Lower leg skin (tissue), 4 donors: ENCODE measurements at regions of chr2 and their contacts with region 1.

Region 1: DNA sequence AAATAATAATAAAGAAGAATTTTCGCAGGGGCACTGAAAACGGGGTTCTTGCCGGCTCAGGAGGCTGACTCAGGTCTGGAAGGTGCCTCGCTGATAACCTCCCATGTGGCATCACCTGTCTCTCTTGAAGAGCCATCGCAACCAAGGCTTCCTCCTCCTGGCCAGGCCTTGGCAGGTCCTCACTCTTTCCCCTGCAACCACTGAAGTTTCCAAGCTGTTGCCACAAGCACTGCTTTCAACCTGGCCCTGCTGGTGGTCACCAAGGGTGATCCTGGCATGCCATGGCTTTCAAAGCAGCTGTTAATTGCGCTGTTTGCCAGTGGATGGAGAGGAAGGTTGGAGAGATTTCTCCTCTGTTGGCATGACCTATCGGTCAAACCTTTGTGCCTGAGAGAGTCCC is 163.6 kb upstream of the COPS8 start:
- DNase-seq: no peak
- H3K4me3 ChIP-seq: no peak overlapping the region
- CTCF ChIP-seq: no peak
- POLR2A ChIP-seq: no peak

Region 2: DNA sequence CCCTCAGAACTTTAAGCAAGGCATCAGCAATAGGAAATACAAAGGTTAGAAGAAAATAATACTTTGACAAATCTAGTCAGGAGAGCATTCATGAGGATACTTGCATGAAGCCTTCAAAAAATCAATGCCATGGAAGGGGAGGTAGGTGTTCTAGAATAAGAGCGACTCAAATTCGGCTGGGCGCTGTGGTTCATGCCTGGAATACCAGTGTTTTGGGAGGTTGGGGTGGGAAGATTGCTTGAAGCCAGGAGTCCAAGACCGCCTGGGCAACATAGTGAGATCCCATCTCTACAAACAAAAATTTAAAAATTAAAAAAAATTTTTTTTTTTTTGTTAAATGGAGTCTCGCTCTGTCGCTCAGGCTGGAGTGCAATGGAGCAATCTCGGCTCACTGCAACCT is 775.6 kb before region 1 on chr2:
- intact Hi-C with region 1: loop called (anchors 5 kb)
- DNase-seq: peak in 1 of 2 donors; percentile 31
- H3K4me3 ChIP-seq: no peak overlapping the region
- CTCF ChIP-seq: no peak
- POLR2A ChIP-seq: no peak